PC-9 (cell line): ENCODE measurements at regions of chr4 and their contacts with region 1.

Region 1: GRCh38 chr4:13548984-13549546 is 4.8 kb upstream of the NKX3-2 start:
- DNase-seq: peak in 1 of 2 experiments; percentile 69
- H3K4me3 ChIP-seq: peak overlapping the region; percentile 55; the same call in 1 of the 2 replicates
- H3K27ac ChIP-seq: no peak overlapping the region
- H3K4me1 ChIP-seq: peaks cover 5% of the 10 kb centered on the region; the same call in 1 of the 2 replicates
- H3K27me3 ChIP-seq: no peaks in the 10 kb centered on the region
- CTCF ChIP-seq: peak; percentile 89

Region 2: GRCh38 chr4:12633053-12633651 is 915.9 kb before region 1 on chr4:
- CTCF ChIA-PET with region 1: no interaction called
- POLR2A ChIA-PET with region 1: no interaction called
- intact Hi-C with region 1: loop called (anchors 5 kb)
- DNase-seq: peak; percentile 39 to 68
- H3K4me3 ChIP-seq: no peak overlapping the region
- H3K27ac ChIP-seq: no peak overlapping the region
- H3K4me1 ChIP-seq: no peaks in the 10 kb centered on the region
- H3K27me3 ChIP-seq: no peaks in the 10 kb centered on the region
- CTCF ChIP-seq: peak; percentile 84

Region 3: GRCh38 chr4:12729384-12729783 is 819.7 kb before region 1 on chr4:
- CTCF ChIA-PET with region 1: no interaction called
- POLR2A ChIA-PET with region 1: no interaction called
- intact Hi-C with region 1: loop called (anchors 1 kb)
- DNase-seq: no peak
- H3K4me3 ChIP-seq: no peak overlapping the region
- H3K27ac ChIP-seq: no peak overlapping the region
- H3K4me1 ChIP-seq: no peaks in the 10 kb centered on the region
- H3K27me3 ChIP-seq: no peaks in the 10 kb centered on the region
- CTCF ChIP-seq: peak; percentile 65

Region 4: GRCh38 chr4:12852338-12853307 is 696.4 kb before region 1 on chr4:
- CTCF ChIA-PET with region 1: no interaction called
- POLR2A ChIA-PET with region 1: no interaction called
- intact Hi-C with region 1: loop called (anchors 1 kb)
- DNase-seq: peak; percentile 0 to 62
- H3K4me3 ChIP-seq: no peak overlapping the region
- H3K27ac ChIP-seq: no peak overlapping the region
- H3K4me1 ChIP-seq: no peaks in the 10 kb centered on the region
- H3K27me3 ChIP-seq: no peaks in the 10 kb centered on the region
- CTCF ChIP-seq: peak; percentile 64

Region 5: DNA sequence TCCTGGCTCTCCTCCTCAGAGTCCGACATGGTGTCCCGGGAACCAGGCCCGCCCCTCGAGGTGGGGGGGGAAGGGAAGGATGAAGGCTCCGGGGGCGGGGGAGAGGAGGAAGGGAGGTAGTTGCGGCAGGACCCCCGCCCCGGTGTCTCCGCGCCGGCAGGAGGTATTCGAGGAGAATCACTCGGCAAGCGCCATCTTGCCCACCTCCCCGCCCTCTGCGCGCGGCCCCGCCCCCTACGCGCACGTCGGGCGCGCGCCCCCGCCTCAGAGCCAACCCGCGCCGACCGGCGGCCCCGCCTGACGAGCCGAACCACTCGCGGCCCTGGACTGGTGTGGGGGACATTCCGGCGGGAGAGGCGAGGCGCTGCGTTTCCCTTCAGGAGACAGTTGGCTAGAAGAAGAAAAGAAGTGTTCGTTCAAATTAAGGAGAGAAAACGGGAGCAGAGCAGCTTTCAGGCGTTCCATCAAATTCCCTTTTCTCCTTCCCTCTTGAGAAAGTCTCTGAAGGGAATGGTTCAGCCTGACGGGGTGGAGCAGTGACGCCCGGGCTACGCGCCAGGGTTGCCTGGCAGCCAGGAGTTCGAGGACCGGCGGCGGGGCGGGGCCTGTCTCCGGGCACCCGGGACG is 64.8 kb before region 1 on chr4 and contains the start of gene RAB28:
- CTCF ChIA-PET with region 1: no interaction called
- POLR2A ChIA-PET with region 1: no interaction called
- intact Hi-C with region 1: loop called (anchors 1 kb)
- DNase-seq: peak; percentile 75 to 90
- H3K4me3 ChIP-seq: peak within 1 kb of the TSS; percentile 81
- H3K27ac ChIP-seq: peak within 1 kb of the TSS; percentile 57
- H3K4me1 ChIP-seq: peaks cover 17% of the 10 kb centered on the region
- H3K27me3 ChIP-seq: no peaks in the 10 kb centered on the region
- CTCF ChIP-seq: no peak
- total RNA-seq, gene RAB28: 15.8 and 17.5 TPM in 2 replicates